GM18951 (cell line): ENCODE measurements at regions of chr12 and their contacts with region 1.

Region 1: DNA sequence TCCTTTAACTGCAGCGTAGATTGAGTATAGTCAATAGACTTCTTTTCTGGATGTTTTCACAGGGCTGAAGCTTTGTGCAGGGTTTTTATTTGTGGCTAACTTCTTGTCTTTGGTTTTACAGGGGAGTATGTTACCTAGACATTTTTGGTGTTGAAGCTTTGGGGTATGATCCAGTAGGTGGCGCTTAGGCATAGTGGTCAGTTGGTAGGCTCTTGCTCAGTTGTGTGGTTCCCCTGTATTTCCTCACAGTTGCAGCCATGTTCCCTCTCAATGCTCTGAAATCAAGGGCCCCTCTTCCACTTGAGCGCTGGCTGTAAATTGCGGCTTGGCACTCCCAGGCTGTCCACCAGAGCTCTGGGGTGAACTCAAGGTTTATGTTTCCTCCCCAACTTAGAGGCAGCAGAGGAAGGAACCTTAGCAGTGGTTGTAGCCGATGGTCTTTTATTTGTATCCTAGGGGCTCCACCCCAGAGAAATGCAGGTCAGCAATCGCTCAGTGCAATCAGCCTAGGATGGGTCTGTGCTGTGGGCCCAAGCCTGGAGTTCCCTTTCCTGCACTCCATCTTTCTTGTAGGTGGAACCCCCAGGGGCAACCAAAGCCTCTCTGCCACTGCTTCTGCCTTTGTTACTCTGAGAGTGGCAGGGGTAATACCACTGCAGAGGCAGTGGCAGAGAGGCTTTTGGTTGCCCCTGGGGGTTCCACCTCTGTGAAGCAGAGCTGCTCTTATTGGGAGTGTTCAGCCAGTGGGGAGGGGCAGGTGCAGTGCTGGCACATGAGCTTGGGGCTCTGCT is 55.1 kb downstream of the CMAS start:
- POLR2A ChIP-seq: no peak

Region 2: DNA sequence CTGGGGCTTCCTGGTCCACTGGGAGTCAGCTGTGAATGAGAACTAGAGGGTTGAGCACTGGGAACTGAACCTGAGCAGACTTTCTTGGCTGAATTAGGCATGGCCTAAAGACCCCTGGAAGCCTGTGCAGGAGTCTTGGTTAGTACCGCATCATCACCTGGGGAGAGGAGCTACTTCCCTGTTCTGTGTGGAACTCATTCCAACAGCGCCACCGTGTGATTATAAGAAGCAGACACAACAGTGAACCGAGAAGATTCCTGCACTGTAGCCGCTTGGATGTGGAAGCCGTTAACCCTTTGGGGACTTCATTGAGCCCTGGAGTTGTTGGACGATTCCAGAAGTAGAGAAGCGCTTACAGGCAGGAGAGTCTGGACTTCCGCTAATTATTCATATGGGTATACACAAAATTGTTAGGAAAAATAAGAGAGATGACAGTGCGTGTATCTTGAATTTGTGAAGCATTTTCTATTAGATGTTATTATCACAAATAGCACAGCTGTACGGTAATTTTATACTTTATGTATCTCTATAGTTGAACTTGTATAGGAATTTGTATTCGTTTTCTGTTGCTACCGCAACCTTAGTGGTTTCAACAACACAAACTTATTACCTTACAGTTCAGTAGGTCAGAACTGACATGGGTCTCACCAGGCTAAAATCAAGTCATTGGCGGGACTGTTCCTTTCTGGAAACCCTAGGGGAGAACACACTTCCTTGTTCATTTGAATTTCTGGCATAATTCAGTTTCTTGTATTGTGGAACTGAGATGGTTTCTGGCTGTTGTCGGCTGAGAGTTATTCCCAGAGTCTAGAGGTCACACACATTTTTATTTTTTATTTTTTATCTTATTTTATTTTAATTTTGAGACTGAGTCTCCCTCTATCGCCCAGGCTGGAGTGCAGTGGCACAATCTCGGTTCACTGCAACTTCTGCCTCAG is 342.5 kb after region 1 on chr12:
- in situ Hi-C with region 1: loop called (anchors 25 kb)
- POLR2A ChIP-seq: no peak